Activated CD4-positive, alpha-beta T cell treated with anti-CD3 and anti-CD28 coated beads, Interleukin-2, amount 10 ng/mL, durations not matched to agents 24 days and 14 days (primary cell): ENCODE measurements at regions of chr1 and their contacts with region 1.

Region 1: DNA sequence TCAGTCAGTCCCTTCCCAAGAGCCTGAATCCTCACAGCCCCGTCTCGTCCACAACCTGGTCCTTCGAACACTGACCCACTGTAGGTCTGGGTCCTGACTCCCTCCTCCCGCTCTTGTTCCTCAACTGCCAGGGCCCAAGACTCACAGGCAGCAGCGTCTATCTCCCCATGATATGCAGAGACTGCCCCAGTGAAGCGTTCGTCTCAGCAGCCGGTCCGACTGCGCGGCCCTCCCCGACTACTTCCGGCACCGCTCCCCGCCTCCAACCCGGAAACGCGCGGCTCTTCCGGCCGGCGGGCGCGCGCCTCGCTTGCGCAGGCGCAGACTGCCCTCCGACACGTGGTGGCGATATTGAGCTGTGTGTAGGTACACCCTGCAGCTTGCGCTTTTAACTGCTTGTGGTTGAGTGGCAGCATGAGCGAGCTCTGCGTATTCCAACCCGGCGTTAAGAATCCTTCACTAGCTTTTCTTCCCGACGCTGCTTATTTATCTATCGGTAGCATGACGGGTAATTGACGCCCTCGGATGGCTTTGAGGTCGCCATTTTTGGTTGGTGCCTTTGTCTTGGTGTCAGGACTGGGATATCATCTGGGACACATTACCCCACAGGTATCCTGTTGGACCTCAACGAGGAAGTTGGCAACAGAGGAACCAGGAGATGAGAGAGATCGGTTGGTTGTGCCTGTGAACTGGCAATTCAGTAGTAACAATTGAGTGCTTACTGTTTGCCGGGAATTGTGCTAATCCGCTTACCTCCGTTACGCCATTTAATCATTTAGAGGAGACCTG is at the start of gene TAF12:
- DNase-seq: peak; percentile 96
- H3K4me3 Mint-ChIP-seq: peak within 1 kb of the TSS; percentile 98
- H3K27ac Mint-ChIP-seq: peak within 1 kb of the TSS; percentile 99
- H3K4me1 Mint-ChIP-seq: peaks cover 39% of the 10 kb centered on the region
- H3K27me3 Mint-ChIP-seq: no peaks in the 10 kb centered on the region
- total RNA-seq, gene TAF12: 31.7 and 33.8 TPM in 2 replicates

Region 2: DNA sequence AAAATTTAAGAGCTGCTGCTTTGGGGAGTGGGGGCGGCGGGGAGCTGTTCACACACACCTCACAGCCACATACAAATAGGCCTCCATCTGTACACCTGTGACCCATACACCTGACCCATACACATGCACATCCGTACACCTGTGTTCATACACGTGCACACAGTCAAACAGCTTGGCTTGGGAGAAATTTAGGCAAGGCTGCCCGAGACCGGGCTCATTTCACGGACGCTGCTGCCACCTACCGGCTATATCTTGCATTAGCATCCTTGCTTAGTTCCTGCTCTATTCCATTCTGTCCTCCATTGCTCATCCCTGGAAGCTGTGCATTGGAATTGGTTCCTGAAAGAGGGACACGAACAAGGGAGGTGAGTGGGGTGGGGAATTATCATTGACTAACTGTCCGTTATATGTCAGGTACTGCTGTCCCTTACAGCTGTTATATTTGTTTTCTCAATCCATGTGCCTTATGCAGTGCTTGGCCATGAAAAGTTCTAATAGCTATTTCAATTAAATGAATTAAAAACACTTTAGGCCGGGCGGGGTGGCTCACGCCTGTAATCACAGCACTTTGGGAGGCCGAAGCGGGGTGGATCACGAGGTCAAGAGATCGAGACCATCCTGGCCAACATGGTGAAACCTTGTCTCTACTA is 234.2 kb after region 1 on chr1:
- intact Hi-C with region 1: loop called (anchors 1 kb)
- DNase-seq: peak; percentile 93
- H3K4me3 Mint-ChIP-seq: no peak overlapping the region
- H3K27ac Mint-ChIP-seq: no peak overlapping the region
- H3K4me1 Mint-ChIP-seq: peaks cover 10% of the 10 kb centered on the region
- H3K27me3 Mint-ChIP-seq: peaks cover 15% of the 10 kb centered on the region